ENCODE measurements at regions of chr20 and their contacts with region 1.

Region 1: DNA sequence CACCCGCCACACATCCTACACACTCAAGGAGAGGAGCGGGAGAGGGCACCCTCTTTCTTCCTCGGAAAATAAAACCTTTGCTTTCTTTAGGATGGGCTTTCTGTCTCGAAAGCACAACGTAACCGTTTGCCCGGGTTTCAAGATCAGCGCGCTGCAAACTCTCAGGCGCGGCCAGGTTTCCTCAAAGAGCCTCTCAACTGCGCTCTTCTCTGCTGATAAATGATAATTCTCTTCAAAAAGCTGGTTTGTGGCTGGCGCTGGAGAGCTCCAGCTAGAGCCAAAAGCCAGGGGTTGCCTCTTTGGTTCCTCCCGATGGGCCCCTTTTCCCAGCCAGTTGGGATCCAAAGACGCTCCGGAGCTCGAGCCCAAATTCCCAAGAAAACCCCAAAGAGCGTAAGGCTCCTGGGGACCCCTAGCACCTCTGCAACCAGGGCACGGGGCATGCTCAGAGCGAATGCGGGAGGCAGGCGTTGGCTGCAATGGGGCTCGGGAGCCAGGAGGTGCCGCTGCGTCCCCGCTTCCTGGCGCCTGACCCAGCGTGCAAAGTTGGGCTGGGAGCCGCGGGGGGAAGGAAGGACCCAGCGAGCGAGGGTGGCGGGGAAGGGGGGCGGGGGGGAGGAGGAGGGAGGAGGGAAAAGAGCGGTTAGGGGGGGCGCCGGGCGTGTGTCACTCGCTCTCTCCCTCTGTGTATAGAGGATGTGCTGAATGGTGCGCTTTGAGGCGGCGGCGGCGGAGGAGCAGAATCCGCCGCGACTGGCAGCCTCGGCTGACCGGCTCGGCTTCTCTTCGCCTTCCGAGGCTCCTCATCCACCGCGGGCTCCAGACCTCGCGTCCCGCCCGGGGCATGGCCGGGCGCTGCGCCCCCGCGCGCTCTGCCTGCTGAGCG is at the start of gene PLCB1:
- DNase-seq: peak; percentile 86
- ATAC-seq: peak; percentile 96
- H3K4me3 ChIP-seq: peak within 1 kb of the TSS; percentile 76 to 87 (median 84)
- H3K27ac ChIP-seq: peak within 1 kb of the TSS; percentile 38
- H3K4me1 ChIP-seq: peaks cover 72% of the 10 kb centered on the region
- H3K27me3 ChIP-seq: no peaks in the 10 kb centered on the region; a peak in 1 of 5 replicates
- CTCF ChIP-seq: peak; percentile 97
- EP300 ChIP-seq: 0 out of 4 replicates have a peak, but pooled peaks have one; percentile 8 to 13
- POLR2A ChIP-seq: 0 out of 4 replicates have a peak, but pooled peaks have one; percentile 31 to 40
- RAD21 ChIP-seq: peak; percentile 98
- total RNA-seq, gene PLCB1: 42.4 and 68.9 TPM in 2 replicates

Region 2: GRCh38 chr20:8116067-8116811 is 15.6 kb before region 1 on chr20:
- CTCF ChIA-PET with region 1: no interaction called
- POLR2A ChIA-PET with region 1: interaction called, 24 read pairs
- in situ Hi-C with region 1: no loop called
- intact Hi-C with region 1: no loop called
- DNase-seq: peak; percentile 30
- ATAC-seq: no peak
- H3K4me3 ChIP-seq: no peak overlapping the region; a peak in 1 of 6 replicates
- H3K27ac ChIP-seq: no peak overlapping the region
- H3K4me1 ChIP-seq: peaks cover 37% of the 10 kb centered on the region
- H3K27me3 ChIP-seq: no peaks in the 10 kb centered on the region
- CTCF ChIP-seq: no peak
- EP300 ChIP-seq: no peak
- POLR2A ChIP-seq: no peak
- RAD21 ChIP-seq: no peak

Region 3: GRCh38 chr20:8244637-8245036 is 112.8 kb after region 1 on chr20:
- CTCF ChIA-PET with region 1: no interaction called
- POLR2A ChIA-PET with region 1: interaction called, 3 read pairs
- in situ Hi-C with region 1: loop called (anchors 10 kb)
- intact Hi-C with region 1: no loop called
- DNase-seq: peak; percentile 50
- ATAC-seq: peak; percentile 50; the same call in 1 of the 3 replicates
- H3K4me3 ChIP-seq: no peak overlapping the region
- H3K27ac ChIP-seq: no peak overlapping the region
- H3K4me1 ChIP-seq: peaks cover 45% of the 10 kb centered on the region
- H3K27me3 ChIP-seq: no peaks in the 10 kb centered on the region
- CTCF ChIP-seq: no peak
- EP300 ChIP-seq: no peak
- POLR2A ChIP-seq: no peak
- RAD21 ChIP-seq: no peak

Region 4: DNA sequence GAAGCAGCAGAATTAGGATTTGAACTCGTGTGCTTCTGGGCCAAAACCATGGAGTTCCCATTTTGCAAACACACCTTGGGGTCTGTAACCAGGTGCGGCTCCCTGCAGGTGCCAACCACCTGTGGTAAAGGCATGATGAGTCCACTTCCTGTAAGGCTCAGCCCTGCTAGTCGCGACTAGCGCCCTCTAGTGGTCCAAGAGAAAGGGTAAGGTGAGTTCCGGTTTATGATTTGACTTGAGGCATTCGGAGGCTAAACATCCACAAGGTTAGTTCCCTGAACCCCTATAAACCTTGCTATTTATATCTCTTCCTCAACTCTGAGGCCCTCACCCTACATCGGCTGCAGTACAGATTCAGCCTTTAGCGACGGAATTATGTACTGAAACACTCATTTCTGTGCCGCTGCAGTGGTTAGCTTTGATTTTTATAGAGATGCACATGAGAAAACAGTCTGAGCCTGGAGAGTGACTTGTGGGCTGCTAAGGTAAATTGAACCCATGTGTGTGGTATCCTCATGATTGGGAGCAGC is 173.7 kb after region 1 on chr20:
- CTCF ChIA-PET with region 1: interaction called, 23 read pairs
- POLR2A ChIA-PET with region 1: no interaction called
- in situ Hi-C with region 1: loop called (anchors 5 kb)
- intact Hi-C with region 1: loop called (anchors 1 kb)
- DNase-seq: peak; percentile 83
- ATAC-seq: peak; percentile 97
- H3K4me3 ChIP-seq: no peak overlapping the region
- H3K27ac ChIP-seq: no peak overlapping the region
- H3K4me1 ChIP-seq: no peaks in the 10 kb centered on the region
- H3K27me3 ChIP-seq: no peaks in the 10 kb centered on the region
- CTCF ChIP-seq: peak; percentile 87
- EP300 ChIP-seq: no peak
- POLR2A ChIP-seq: no peak
- RAD21 ChIP-seq: peak; percentile 87

Region 5: GRCh38 chr20:8454137-8454712 is 322.4 kb after region 1 on chr20:
- CTCF ChIA-PET with region 1: interaction called, 3 read pairs
- POLR2A ChIA-PET with region 1: no interaction called
- in situ Hi-C with region 1: no loop called
- intact Hi-C with region 1: loop called (anchors 1 kb)
- DNase-seq: peak; percentile 65
- ATAC-seq: peak; percentile 93
- H3K4me3 ChIP-seq: no peak overlapping the region
- H3K27ac ChIP-seq: no peak overlapping the region
- H3K4me1 ChIP-seq: no peaks in the 10 kb centered on the region
- H3K27me3 ChIP-seq: no peaks in the 10 kb centered on the region
- CTCF ChIP-seq: peak; percentile 72
- EP300 ChIP-seq: no peak
- POLR2A ChIP-seq: no peak
- RAD21 ChIP-seq: peak; percentile 48; the same call in 1 of the 2 replicates

Region 6: DNA sequence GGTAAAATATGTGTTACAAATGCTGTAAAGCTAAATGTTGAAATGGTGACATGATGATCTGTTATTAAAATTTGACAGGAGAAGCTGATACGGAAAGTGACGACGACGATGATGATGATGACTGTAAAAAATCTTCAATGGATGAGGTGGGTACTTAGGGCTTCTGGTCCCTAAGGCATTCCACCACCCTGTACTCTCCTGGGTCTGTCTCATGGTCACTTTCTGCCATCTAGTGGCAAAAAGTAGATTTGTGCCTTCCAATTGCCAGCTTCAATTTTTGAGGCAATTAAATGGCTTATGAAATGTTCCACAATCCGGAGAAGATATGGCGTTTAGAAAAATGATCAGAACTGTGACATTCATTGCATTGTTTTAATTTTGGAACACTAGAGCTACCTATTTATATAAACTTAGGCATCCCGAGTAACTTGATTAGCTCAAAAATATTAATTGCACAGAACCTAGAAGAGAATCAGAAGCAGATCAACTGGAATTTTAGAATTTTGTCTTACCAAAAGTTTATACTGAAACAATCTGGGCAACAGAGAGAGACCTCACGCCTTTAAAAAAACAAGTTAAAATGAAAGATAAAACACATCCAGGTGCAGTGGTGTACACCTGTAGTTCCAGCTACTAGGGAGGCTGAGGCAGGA is 590.6 kb after region 1 on chr20:
- CTCF ChIA-PET with region 1: interaction called, 17 read pairs
- POLR2A ChIA-PET with region 1: no interaction called
- in situ Hi-C with region 1: loop called (anchors 5 kb)
- intact Hi-C with region 1: loop called (anchors 1 kb)
- DNase-seq: peak; percentile 83
- ATAC-seq: peak; percentile 98
- H3K4me3 ChIP-seq: no peak overlapping the region
- H3K27ac ChIP-seq: no peak overlapping the region
- H3K4me1 ChIP-seq: no peaks in the 10 kb centered on the region
- H3K27me3 ChIP-seq: no peaks in the 10 kb centered on the region
- CTCF ChIP-seq: peak; percentile 94
- EP300 ChIP-seq: no peak
- POLR2A ChIP-seq: no peak
- RAD21 ChIP-seq: peak; percentile 89